ENCODE measurements at regions of chr3 and their contacts with region 1.

Region 1: GRCh38 chr3:141386611-141387111 is 18.4 kb downstream of the ZBTB38 start:
- DNase-seq: peak; percentile 83
- ATAC-seq: peak; percentile 45
- H3K4me3 ChIP-seq: peak overlapping the region; percentile 44
- H3K27ac ChIP-seq: peak overlapping the region; percentile 78
- H3K4me1 ChIP-seq: peaks cover 20% of the 10 kb centered on the region
- H3K27me3 ChIP-seq: no peaks in the 10 kb centered on the region
- CTCF ChIP-seq: no peak
- POLR2A ChIP-seq: peak; percentile 69
- RAD21 ChIP-seq: no peak

Region 2: DNA sequence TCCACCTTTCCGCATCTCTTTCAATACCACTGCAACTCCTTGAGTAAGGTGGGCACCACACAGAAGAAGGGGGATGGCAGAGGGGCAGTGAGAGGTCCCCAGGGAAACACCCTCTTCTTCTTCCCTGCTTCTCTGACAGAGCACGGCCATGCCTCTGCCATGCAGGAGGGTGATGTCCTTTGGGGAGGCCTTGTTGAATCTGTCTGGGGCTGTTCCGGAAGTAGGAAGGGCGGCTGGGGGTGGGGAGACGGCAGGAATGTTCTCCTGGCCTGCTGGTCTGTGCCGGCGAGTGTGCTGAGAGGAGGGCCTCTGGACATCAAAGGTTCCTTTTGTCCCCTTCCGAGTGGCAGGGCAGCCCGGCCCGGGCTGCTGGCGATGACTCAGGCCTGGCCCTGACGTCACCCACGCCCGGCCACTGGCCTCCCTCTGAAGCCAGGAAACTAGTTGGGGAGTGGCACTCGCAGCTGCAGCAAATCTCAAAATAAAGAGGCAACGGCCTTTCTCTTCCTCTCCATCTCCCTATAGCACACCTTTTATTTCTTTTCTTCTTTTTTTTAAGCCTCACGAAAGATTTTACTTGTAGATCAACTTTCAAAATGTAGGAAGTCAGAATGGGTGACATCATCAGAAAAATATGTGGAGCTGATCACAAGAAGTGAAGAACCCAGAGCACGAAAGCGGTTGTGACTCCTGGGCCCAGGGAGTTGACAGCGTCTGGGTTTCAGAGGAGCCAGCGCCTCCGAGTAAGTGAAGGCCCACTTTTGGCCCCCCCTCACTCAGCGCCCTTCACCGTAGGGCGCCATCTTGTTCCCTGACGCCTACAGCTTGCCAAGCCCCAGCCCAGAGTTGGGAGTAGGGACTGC is 18.4 kb before region 1 on chr3 and contains the start of gene ZBTB38:
- CTCF ChIA-PET with region 1: interaction called, 8 read pairs
- POLR2A ChIA-PET with region 1: interaction called, 5 read pairs
- dilution Hi-C with region 1: no loop called
- in situ Hi-C with region 1: no loop called
- intact Hi-C with region 1: loop called (anchors 2 kb)
- DNase-seq: peak; percentile 97
- ATAC-seq: peak; percentile 71
- H3K4me3 ChIP-seq: peak within 1 kb of the TSS; percentile 45; the same call in 1 of the 2 replicates
- H3K27ac ChIP-seq: peak within 1 kb of the TSS; percentile 99
- H3K4me1 ChIP-seq: peaks cover 21% of the 10 kb centered on the region
- H3K27me3 ChIP-seq: no peaks in the 10 kb centered on the region
- CTCF ChIP-seq: no peak
- POLR2A ChIP-seq: peak; percentile 43
- RAD21 ChIP-seq: no peak; the same call in 1 of the 2 replicates
- total RNA-seq, gene ZBTB38: 230 and 274 TPM in 2 replicates